Heart left ventricle (tissue), 16 donors: ENCODE measurements at regions of chr13 and their contacts with region 1.

Region 1: DNA sequence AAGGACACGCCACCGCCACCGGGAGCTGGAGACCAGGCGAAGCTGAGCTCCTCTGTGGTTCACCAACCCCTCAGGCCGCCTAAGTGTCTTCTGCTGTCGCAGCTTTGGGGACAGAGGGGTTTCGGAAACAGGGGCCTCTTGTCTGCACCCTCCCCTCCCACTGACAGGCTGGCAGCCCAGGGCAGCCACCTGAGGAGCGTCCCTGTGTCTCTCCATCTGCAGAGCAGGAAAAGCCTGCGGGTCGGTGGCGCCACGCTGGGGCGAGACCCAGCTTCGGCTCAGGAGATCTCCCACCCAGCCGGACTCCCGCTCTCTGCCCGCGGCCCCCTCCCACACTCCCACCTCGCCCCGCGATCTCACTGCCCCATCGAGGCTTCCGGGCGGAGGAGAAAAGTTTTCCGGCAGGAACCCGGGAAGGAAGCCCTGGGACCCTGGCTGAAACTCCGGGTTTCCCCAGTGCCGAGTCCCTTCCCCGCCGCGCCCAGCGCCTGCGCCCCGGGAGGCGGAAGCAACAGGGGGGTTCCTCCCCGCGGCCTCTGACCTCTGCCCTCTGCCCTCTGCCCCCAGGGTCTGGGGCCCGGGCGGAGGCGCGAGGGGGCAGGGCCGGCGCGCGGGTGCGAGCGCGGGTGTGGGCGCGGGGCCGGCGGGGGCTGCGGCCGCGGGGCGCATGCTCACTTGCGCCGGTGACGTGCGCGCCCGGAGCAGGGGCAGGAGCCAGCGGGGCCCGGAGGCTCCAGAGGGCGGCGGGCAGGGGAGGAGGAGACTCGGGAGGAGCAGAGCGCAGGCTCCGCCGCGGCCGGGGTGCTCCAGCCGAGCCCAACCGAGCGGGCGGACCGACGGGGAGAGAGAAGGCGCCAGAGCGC is at the start of gene ATP11A:
- DNase-seq: peak; percentile 93 to 97 (median 96)
- ATAC-seq: peak; percentile 84 to 93 (median 90)
- H3K4me3 ChIP-seq: peak within 1 kb of the TSS; percentile 71 to 99 (median 95)
- H3K27ac ChIP-seq: peak within 1 kb of the TSS; percentile 89 to 98 (median 96)
- H3K4me1 ChIP-seq: peaks cover 3 to 46% (median 33%) of the 10 kb centered on the region in 12 donors
- H3K27me3 ChIP-seq: no peaks in the 10 kb centered on the region
- CTCF ChIP-seq: peak in 3 of 12 donors; percentile 28 to 31 (median 30)
- POLR2A ChIP-seq: peak; percentile 87 to 98
- total RNA-seq, gene ATP11A: 51.4 to 146 (median 110) TPM

Region 2: DNA sequence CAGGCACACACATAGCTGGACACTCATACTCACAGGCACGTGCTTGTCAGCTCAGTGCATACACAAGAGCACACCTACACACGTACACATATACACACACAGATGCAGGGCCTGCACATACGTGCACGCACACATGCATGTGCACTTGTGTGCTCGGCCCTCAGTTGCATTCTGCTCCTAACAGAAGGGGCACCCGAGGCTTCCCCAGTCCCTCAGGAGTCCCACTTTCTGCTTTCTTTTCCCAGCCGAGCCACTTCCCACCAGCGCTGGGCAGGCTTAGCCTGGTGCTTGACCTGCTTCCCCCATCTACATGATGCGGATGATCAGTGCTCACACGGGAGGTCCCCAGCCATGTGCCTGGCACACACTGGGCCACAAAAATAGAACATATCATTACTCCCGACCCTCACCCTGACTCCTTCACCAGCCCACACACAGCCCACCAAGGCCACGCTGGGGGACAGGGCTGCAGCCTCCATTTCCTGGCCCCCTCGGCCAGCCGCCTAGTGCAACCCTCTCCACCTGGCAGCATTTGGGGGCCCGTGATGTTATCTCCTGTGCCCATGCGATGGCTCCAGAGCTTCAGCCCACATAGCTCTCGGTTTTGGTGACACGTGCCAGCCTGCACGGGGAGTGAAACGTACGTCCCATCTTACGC is 438.6 kb before region 1 on chr13:
- intact Hi-C with region 1: no loop called
- DNase-seq: no peak
- ATAC-seq: no peak
- H3K4me3 ChIP-seq: no peak overlapping the region
- H3K27ac ChIP-seq: no peak overlapping the region
- H3K4me1 ChIP-seq: no peaks in the 10 kb centered on the region
- H3K27me3 ChIP-seq: peaks cover 0 to 23% (median 0%) of the 10 kb centered on the region in 9 donors
- CTCF ChIP-seq: no peak
- POLR2A ChIP-seq: no peak

Region 3: DNA sequence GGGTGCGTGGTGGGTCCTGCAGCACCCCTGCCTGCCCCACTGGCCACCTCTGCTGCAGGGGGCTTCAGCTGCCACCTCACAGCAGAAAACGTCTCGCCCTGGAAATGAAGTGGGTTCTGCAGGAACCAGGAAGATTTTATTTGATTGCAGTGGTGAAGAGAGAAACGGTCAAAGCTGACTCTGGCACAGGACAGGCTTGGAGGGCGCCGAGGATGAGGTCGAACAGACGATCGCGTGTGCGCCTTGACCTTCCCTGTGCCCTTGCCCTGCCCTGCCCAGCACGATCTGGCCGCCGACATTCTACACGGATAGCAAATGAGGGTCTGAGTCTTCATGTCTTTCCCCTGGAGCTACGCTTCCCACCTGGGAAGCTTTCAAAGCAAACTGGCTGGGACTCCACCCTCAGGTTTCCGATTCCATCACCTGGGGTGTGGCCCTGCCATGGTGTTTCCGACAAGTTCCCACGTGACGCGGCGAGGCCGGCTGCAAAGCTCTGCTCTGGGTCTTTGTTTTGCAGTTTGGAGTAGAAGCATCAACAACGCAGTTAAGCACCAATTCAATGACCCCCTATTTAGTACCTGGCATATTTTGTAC is 51.3 kb before region 1 on chr13:
- intact Hi-C with region 1: loop called in 7 of 10 experiments (anchors 2 to 5 kb)
- DNase-seq: no peak
- ATAC-seq: no peak
- H3K4me3 ChIP-seq: no peak overlapping the region
- H3K27ac ChIP-seq: no peak overlapping the region
- H3K4me1 ChIP-seq: peaks cover 0 to 18% (median 0%) of the 10 kb centered on the region in 12 donors
- H3K27me3 ChIP-seq: peaks cover 2 to 56% (median 17%) of the 10 kb centered on the region in 9 donors
- CTCF ChIP-seq: no peak
- POLR2A ChIP-seq: no peak

Region 4: GRCh38 chr13:112664501-112665203 is 24.9 kb before region 1 on chr13:
- intact Hi-C with region 1: no loop called
- DNase-seq: no peak
- ATAC-seq: no peak
- H3K4me3 ChIP-seq: no peak overlapping the region
- H3K27ac ChIP-seq: no peak overlapping the region
- H3K4me1 ChIP-seq: no peaks in the 10 kb centered on the region
- H3K27me3 ChIP-seq: peaks cover 0 to 8% (median 0%) of the 10 kb centered on the region in 9 donors
- CTCF ChIP-seq: no peak
- POLR2A ChIP-seq: no peak

Region 5: GRCh38 chr13:112711528-112712265 is 22.2 kb after region 1 on chr13:
- intact Hi-C with region 1: loop called in 3 of 10 experiments (anchors 1 to 2 kb)
- DNase-seq: peak in 4 of 5 donors; percentile 83 to 92 (median 87)
- ATAC-seq: peak; percentile 90 to 96 (median 96)
- H3K4me3 ChIP-seq: peak overlapping the region in 8 of 12 donors; percentile 6 to 45 (median 34)
- H3K27ac ChIP-seq: peak overlapping the region; percentile 33 to 93 (median 90)
- H3K4me1 ChIP-seq: peaks cover 18 to 64% (median 41%) of the 10 kb centered on the region in 12 donors
- H3K27me3 ChIP-seq: no peaks in the 10 kb centered on the region
- CTCF ChIP-seq: peak in 6 of 12 donors; percentile 10 to 46 (median 20)
- POLR2A ChIP-seq: peak in 1 of 2 donors; percentile 32

Region 6: DNA sequence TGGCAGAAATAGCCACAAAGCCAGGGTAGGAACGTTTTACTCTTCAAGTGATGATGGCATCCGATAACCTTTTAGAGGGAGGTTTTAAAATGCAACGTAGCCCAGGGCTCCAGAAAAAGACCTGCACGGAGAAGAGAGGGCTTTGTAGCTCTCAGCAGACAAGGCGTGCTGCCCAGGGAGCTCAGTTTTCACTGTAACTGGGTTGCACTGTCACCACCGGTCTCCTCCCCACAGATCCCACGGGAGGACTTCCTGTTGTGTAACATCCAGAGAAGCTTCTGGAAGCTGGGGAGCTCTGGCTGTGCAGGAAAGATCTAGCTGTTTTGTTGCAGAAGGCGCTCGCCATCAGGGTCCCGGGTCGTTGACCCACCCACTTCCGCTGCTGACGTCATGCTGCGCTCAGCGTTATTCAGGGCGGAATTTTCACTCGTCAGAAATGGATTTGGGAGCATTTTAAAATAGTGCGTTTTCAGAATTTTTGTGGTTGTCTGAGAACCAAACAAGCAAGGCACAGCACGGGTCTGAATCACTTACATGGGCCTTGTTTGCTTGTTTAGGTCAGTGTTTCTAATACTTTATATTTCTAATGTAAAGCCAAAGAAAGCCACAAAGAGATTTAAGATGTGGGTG is 51.1 kb after region 1 on chr13:
- intact Hi-C with region 1: loop called in 2 of 10 experiments (anchors 5 kb)
- DNase-seq: peak; percentile 85 to 87 (median 86)
- ATAC-seq: peak; percentile 70 to 92 (median 82)
- H3K4me3 ChIP-seq: peak overlapping the region in 10 of 12 donors; percentile 2 to 32 (median 8)
- H3K27ac ChIP-seq: peak overlapping the region; percentile 66 to 90 (median 82)
- H3K4me1 ChIP-seq: peaks cover 0 to 55% (median 32%) of the 10 kb centered on the region in 12 donors
- H3K27me3 ChIP-seq: no peaks in the 10 kb centered on the region
- CTCF ChIP-seq: no peak
- POLR2A ChIP-seq: peak in 1 of 2 donors; percentile 31

Region 7: DNA sequence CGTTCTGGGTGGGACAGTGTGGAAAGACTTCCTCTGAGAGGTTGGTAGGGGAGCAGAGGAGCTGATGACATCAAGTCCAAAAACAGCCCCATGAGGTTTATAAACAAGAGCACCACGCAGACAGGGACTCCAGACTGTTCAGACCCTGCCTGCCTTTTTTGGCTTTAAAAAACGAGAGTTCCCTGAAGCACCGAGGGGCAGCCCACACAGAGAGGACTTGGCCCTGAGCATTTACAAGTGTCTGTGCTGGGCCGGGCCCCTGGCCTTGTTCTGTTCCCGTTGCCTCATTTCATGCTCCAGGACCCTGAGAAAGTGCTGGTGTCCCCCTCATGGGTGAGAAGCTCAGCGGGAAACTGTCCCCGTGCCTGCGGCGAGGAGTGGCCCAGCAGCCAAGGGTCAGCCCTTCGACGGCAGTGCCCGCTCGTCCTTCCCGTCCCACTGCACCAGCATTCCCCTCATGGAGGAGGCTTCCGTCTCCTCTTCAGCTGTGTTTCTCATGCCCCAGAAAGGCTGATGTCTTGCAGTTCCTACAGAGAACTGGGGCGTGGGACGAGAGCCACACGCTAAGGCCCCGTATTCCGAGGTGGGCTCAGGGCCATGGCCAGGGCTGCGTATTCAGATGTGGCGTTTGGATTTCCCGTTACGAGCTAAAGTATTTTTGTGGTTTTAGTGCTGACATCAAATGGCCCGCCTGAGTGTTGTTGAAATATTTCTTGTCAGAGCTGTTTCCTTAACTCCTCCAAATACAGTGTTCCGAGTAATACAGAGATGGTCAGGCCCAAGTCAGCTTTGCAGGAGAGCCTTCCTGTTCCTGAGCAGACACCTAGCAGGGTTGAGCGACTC is 93.8 kb after region 1 on chr13:
- intact Hi-C with region 1: loop called in 1 of 10 experiments (anchors 5 kb)
- DNase-seq: no peak
- ATAC-seq: peak; percentile 54 to 80 (median 64)
- H3K4me3 ChIP-seq: no peak overlapping the region
- H3K27ac ChIP-seq: peak overlapping the region in 10 of 12 donors; percentile 50 to 86 (median 77)
- H3K4me1 ChIP-seq: peaks cover 0 to 39% (median 26%) of the 10 kb centered on the region in 12 donors
- H3K27me3 ChIP-seq: no peaks in the 10 kb centered on the region
- CTCF ChIP-seq: no peak
- POLR2A ChIP-seq: no peak

Region 8: GRCh38 chr13:112873851-112874750 is 184.6 kb after region 1 on chr13:
- intact Hi-C with region 1: loop called in 1 of 10 experiments (anchors 1 kb)
- DNase-seq: peak; percentile 76 to 87 (median 78)
- ATAC-seq: peak; percentile 54 to 89 (median 84)
- H3K4me3 ChIP-seq: peak overlapping the region in 2 of 12 donors; percentile 21 to 32
- H3K27ac ChIP-seq: peak overlapping the region in 9 of 12 donors; percentile 6 to 55 (median 29)
- H3K4me1 ChIP-seq: peaks cover 0 to 15% (median 5%) of the 10 kb centered on the region in 12 donors
- H3K27me3 ChIP-seq: no peaks in the 10 kb centered on the region
- CTCF ChIP-seq: peak; percentile 90 to 97 (median 94)
- POLR2A ChIP-seq: no peak